ENCODE measurements at regions of chr16 and their contacts with region 1.

Region 1: DNA sequence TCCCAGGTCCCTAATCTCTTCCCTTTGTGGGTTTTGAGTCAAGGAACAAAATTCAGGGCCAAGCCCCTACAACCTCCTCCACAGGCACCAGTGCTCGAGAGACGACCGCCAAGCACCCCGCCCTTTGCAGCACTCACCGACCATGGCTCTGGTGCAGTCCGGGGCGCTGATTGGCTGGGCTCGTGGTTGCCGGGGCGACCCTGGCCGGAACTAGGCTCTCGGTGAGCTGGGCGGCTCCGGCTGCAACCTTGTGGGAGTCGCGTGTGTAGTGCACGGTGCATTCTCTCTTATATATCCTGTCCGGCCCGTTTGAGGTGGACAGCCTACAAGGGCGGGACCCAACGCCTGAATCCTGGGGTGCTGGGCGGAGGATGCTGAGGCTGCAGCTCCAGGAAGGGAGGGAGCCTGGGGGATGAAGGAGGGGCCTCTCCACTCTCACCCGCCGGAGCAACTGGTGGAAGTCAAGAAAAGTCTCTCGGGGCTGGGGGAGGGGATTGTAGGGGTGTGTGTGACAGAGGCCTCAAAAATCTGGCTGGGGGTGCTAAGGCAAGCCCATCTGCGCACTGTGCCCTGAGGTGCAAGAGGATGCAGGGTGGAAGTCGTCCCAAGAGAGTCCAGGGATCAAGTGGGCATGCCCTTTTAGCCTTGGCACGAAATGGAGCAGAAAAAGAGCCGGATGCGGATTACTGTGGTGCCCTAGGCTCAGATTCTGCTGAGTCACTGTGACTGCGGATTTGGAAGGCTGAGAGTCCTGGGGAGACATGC is at the start of gene NQO1:
- DNase-seq: peak; percentile 91
- H3K4me3 Mint-ChIP-seq: peak within 1 kb of the TSS; percentile 98
- H3K27ac Mint-ChIP-seq: peak within 1 kb of the TSS; percentile 98
- H3K4me1 Mint-ChIP-seq: peaks cover 42% of the 10 kb centered on the region
- H3K27me3 Mint-ChIP-seq: no peaks in the 10 kb centered on the region
- total RNA-seq, gene NQO1: 9.7 and 9.8 TPM in 2 replicates

Region 2: DNA sequence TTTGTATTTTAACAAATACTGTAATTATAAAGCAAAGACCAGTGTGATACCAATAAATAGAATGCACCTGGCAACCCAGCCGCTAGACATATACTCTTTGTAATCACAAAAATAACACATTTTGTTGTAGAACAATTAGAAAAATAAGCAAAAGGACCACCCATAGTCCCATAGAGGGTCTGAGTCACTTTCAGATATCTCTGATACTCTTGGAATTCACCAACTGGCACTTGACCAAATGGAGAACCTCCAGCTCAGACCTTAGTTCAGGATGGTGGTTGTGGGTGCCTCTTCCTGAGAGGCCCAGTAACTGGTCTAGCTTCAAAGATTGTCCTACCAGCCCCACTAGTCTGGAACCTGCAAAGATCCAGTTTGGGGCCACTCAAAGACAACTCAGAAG is 339.9 kb before region 1 on chr16:
- intact Hi-C with region 1: loop called (anchors 1 kb)
- DNase-seq: no peak
- H3K4me3 Mint-ChIP-seq: peak overlapping the region; percentile 92
- H3K27ac Mint-ChIP-seq: no peak overlapping the region
- H3K4me1 Mint-ChIP-seq: peaks cover 26% of the 10 kb centered on the region
- H3K27me3 Mint-ChIP-seq: no peaks in the 10 kb centered on the region

Region 3: DNA sequence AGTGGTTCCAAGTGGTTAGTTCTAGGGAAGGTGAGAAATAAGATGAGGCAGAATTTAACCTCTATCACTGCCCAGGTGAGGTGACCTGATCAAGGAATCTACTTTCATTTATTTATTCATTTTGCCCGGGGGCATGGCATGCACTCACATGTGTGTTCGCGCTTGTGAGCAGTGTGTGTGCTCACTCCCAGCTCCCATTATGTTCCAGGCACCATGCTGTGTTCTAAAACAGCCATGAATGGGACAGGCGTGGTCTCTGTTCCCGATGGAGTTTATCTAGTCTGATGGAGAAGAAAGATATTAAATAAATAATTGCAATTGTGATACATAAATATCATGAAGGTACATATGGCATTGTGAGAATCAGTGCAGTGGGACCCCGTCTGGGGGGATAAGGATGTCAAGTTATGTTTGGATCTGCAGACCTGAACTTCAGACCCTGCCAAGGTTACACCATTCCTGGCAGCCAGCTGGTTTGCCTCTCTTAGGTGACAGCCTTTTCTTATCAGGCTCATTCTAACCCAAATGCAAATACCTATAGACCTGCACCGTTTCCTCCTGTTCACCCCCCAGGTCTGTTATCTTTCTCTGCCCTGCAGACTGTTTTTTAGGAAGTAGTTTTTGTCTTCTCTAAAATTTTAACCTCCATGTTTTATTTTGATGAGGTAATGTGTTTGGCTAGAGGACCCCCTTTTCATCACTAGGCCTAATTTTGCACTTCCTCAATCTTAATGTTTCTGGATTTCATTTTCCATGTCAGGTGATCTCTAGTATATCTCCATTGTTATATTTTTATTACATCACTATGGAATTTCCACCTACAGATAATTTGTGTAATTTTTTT is 290.3 kb before region 1 on chr16:
- intact Hi-C with region 1: no loop called
- DNase-seq: no peak
- H3K4me3 Mint-ChIP-seq: no peak overlapping the region
- H3K27ac Mint-ChIP-seq: no peak overlapping the region
- H3K4me1 Mint-ChIP-seq: peaks cover 77% of the 10 kb centered on the region
- H3K27me3 Mint-ChIP-seq: no peaks in the 10 kb centered on the region

Region 4: GRCh38 chr16:69709456-69710084 is 16.9 kb before region 1 on chr16:
- intact Hi-C with region 1: loop called (anchors 1 kb)
- DNase-seq: no peak
- H3K4me3 Mint-ChIP-seq: no peak overlapping the region
- H3K27ac Mint-ChIP-seq: no peak overlapping the region
- H3K4me1 Mint-ChIP-seq: peaks cover 7% of the 10 kb centered on the region
- H3K27me3 Mint-ChIP-seq: no peaks in the 10 kb centered on the region

Region 5: DNA sequence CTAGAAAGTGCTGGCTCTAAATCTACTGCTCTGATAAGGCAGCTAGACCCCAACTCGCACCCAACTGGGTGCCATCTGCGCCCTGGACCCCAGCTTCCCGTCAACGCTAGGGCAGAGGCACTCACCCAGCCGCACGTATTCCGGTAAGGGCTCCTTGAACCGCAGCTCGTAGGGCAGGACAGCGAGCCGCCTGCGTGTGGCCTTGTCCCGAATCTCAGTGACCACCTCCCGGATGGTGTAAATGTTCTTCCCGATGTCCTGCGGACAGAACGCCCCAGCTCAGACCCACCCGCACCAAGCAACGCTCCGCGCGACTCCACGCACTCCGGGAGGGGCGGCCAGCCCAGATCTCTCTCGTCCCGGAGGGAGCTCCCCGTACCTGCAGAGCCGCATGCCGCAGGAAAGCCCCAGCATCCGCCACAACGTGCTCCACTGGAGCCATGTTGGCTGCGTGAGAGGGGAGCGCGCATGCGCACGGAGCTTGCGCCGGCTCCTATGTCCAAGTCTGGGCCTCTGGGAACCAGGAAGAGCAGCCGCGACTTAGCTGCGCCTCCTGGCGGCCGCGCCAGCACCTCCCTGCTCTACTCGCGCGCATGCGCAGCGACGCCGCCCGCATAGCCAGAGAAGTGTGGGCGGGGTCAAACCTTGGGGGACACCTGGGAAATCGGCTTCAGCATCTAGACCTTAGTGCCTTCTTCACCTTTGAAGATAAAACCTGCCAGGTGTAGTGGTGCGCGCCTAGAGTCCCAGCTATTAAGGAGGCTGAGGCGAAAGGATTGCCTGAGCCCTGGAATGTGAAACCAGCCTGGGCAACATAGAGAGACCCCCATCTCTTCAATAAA is 28.2 kb after region 1 on chr16 and contains the start of gene NOB1:
- intact Hi-C with region 1: loop called (anchors 1 kb)
- DNase-seq: peak; percentile 97
- H3K4me3 Mint-ChIP-seq: peak within 1 kb of the TSS; percentile 99
- H3K27ac Mint-ChIP-seq: peak within 1 kb of the TSS; percentile 98
- H3K4me1 Mint-ChIP-seq: peaks cover 32% of the 10 kb centered on the region
- H3K27me3 Mint-ChIP-seq: peaks cover 2% of the 10 kb centered on the region
- total RNA-seq, gene NOB1: 132 and 133 TPM in 2 replicates

Region 6: DNA sequence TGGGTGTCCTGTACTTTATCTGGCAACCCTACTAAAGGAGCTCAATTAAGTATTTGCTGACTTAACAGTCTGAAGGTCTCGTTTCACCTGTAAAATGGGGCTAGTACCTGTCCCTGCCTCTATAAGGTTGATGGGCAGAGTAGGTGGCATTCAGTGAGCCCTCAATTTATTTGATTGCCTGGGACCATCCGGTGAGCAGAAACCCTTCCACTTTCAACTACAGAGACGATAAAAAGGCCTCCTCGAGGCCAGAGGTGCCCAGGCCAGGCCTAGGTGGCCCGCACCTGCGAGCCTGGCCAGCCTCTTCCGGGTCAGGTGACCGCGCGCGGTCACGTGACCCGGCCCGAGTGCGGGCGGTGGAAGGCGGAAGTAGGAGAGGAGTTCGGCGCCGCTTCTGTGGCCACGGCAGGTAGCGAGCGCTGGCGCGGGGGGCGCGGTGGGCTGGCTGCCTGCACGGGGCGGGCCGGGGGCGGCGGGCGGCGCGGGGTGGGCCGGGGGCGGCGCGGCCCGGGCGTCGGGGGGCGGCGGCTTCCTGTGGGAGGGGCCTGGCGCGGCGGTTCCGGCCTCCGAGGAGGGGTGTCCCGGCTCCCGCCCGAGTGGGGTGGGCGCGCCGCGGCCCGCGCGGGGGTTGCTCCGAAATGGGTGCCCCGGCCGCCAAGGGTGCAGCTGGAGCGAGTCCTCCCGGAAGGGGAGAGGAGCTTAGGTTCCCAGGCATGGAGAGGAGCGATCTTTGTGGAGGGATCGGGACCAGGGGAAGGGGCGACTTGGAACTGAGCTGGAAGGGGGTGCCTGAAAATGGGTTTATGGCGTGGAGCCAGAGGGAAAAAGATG is 35.7 kb after region 1 on chr16 and contains the start of gene WWP2:
- intact Hi-C with region 1: loop called (anchors 2 kb)
- DNase-seq: peak; percentile 63
- H3K4me3 Mint-ChIP-seq: peak within 1 kb of the TSS; percentile 95
- H3K27ac Mint-ChIP-seq: peak within 1 kb of the TSS; percentile 96
- H3K4me1 Mint-ChIP-seq: peaks cover 31% of the 10 kb centered on the region
- H3K27me3 Mint-ChIP-seq: peaks cover 2% of the 10 kb centered on the region
- total RNA-seq, gene WWP2: 53.8 and 58.3 TPM in 2 replicates